Spleen (tissue), 13 donors: ENCODE measurements at regions of chr12 and their contacts with region 1.

Region 1: GRCh38 chr12:96416033-96416801 is 16.0 kb upstream of the CDK17 start:
- DNase-seq: no peak
- H3K4me3 ChIP-seq: no peak overlapping the region
- H3K27ac ChIP-seq: peak overlapping the region in 2 of 8 donors; percentile 3 to 17
- H3K4me1 ChIP-seq: peaks cover 0 to 28% (median 9%) of the 10 kb centered on the region in 6 donors
- H3K27me3 ChIP-seq: no peaks in the 10 kb centered on the region
- CTCF ChIP-seq: no peak
- POLR2A ChIP-seq: no peak

Region 2: DNA sequence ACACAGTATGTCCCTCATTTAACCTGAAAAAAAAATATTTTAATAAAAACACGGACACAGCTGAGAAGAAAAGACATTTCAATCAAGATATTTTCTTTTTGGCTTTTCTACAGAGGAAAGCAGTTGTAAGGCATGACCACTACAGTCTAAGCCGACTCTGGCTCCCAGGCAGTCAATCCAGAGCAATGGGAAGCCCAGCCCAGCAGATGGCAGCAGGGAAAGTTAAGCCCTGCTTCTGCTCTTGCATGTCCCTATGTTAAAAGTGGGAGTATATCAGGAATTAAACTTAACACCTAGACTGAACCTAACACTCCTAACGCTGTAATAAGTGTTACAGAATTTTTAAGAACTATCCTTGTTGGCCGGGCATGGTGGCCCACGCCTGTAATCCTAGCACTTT is 400.5 kb before region 1 on chr12:
- intact Hi-C with region 1: no loop called
- DNase-seq: no peak
- H3K4me3 ChIP-seq: no peak overlapping the region
- H3K27ac ChIP-seq: no peak overlapping the region
- H3K4me1 ChIP-seq: peaks cover 0 to 9% (median 7%) of the 10 kb centered on the region in 6 donors
- H3K27me3 ChIP-seq: no peaks in the 10 kb centered on the region
- CTCF ChIP-seq: peak in 3 of 11 experiments; percentile 10 to 34 (median 13)
- POLR2A ChIP-seq: no peak

Region 3: DNA sequence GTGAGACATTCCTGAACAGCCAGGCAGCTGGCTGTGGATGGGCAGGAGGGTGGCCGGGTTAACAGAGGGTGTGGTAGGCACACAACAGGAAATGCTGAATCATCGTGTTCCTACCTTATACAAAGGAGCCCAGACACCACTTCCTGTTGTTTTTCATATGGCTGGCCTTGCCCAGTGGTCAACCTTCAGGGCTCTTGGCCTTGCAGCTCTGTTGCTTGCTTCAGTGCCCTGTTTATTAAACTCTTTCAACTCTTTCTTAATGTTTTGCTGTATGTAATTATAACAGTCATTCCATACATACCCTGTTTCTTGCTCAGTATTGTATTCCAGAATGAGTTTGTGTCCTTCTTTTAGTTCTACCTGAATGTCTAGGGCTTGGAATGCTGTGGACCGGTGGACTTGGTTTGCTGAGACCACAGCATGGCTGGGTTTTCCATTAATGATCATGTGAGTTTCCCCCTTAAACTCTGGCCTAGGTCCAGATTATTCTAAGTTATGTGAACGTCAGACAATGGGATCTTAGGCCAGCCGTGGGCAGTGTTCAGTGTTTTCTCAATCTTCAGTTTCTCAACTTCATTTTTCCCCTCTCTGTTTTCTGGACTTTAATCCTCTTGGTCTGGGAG is 85.0 kb after region 1 on chr12:
- intact Hi-C with region 1: loop called (anchors 10 kb)
- DNase-seq: peak; percentile 82
- H3K4me3 ChIP-seq: peak overlapping the region in 1 of 8 donors; percentile 20
- H3K27ac ChIP-seq: peak overlapping the region; percentile 43 to 90 (median 82)
- H3K4me1 ChIP-seq: peaks cover 21 to 38% (median 31%) of the 10 kb centered on the region in 6 donors
- H3K27me3 ChIP-seq: no peaks in the 10 kb centered on the region
- CTCF ChIP-seq: no peak
- POLR2A ChIP-seq: no peak

Region 4: DNA sequence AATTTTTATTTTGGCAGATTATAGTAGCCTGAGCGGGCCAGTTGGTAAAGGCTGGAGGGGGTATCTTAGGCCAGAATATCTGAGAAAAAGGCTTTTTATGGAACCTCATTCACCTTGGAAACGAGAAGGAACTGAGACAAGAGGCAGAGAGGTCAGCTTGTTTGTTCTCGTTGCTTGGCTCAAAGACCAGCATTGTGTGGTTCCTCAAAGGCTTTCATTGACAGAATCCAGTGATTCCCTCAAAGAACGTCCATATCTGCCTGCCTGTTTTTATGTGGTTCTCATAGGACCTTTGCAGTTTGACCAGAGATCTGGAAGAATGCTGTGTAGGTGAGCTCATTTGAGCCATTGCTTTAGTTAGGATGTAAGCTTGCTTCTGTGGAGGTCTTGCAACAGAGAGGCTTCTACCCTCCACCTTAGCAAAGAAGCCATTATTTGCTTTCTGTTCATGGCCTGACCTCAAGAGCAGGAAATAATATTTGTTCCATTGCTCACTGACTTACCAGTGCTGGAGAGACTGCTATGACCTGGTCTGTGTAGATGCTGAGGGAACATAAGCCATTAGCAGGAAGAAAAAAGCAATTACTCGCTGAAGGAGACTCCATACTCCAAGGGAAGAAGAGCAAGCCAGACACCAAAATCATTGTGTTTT is 190.6 kb after region 1 on chr12:
- intact Hi-C with region 1: no loop called
- DNase-seq: no peak
- H3K4me3 ChIP-seq: no peak overlapping the region
- H3K27ac ChIP-seq: no peak overlapping the region
- H3K4me1 ChIP-seq: no peaks in the 10 kb centered on the region
- H3K27me3 ChIP-seq: peaks cover 0 to 7% (median 0%) of the 10 kb centered on the region in 7 donors
- CTCF ChIP-seq: no peak
- POLR2A ChIP-seq: no peak